ENCODE measurements at regions of chr9 and their contacts with region 1.

Region 1: DNA sequence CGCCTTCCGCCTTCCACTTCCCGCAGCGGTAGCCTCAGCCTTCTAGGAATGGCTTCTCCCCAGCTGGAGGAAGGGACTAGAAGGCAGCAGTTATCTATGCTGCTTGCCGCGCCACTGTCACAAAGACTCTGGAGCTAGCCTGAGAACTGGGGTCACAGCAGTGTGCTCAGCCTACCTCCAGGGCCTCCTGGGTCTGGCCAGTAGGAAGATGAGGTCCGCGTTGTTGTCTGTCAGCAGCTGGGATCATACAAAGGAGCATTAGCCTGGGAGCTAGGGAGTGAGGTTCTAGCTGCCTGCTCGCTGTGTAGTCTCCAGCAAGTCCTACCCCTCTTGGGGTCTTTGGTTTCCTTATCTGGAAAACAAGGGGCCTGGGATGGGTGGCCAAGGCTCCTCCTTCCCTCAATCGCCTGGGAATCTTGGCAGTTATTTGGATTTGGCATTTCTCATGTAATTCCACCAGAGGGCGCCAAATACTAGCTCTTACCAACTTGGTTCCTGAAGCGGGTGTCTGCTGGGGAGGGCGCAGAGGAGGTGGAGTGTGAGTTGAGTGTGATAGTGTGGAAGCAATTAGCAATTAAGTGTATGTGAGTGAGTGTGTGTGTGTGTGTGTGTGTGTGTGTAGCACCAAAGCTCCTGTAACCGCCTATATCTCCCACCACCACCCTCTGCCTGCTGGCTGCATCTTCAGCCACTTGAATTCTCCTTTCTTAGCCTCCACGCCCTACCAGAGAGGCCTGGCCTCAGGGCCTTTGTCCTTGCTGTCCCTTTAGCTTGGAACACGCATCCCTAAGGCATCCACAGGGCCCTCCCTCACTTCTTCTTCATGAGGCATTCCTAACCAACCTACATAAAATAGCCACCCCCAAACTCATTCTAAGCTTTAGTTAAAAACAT is 97.1 kb downstream of the ENTREP1 start:
- DNase-seq: peak; percentile 56
- H3K4me3 Mint-ChIP-seq: no peak overlapping the region
- H3K27ac Mint-ChIP-seq: no peak overlapping the region
- H3K4me1 Mint-ChIP-seq: no peaks in the 10 kb centered on the region
- H3K27me3 Mint-ChIP-seq: peaks cover 15% of the 10 kb centered on the region

Region 2: GRCh38 chr9:69250681-69251080 is 171.5 kb before region 1 on chr9:
- CTCF ChIA-PET with region 1: no interaction called
- DNase-seq: no peak
- H3K4me3 Mint-ChIP-seq: no peak overlapping the region
- H3K27ac Mint-ChIP-seq: no peak overlapping the region
- H3K4me1 Mint-ChIP-seq: no peaks in the 10 kb centered on the region
- H3K27me3 Mint-ChIP-seq: no peaks in the 10 kb centered on the region

Region 3: GRCh38 chr9:69549310-69550202 is 127.4 kb after region 1 on chr9:
- CTCF ChIA-PET with region 1: interaction called, 67 read pairs
- DNase-seq: peak; percentile 24
- H3K4me3 Mint-ChIP-seq: no peak overlapping the region
- H3K27ac Mint-ChIP-seq: no peak overlapping the region
- H3K4me1 Mint-ChIP-seq: no peaks in the 10 kb centered on the region
- H3K27me3 Mint-ChIP-seq: peaks cover 12% of the 10 kb centered on the region

Region 4: GRCh38 chr9:69919461-69920061 is 497.4 kb after region 1 on chr9:
- CTCF ChIA-PET with region 1: interaction called, 35 read pairs
- DNase-seq: no peak
- H3K4me3 Mint-ChIP-seq: no peak overlapping the region
- H3K27ac Mint-ChIP-seq: no peak overlapping the region
- H3K4me1 Mint-ChIP-seq: no peaks in the 10 kb centered on the region
- H3K27me3 Mint-ChIP-seq: peaks cover 11% of the 10 kb centered on the region